ENCODE measurements at regions of chrX and their contacts with region 1.

Region 1: DNA sequence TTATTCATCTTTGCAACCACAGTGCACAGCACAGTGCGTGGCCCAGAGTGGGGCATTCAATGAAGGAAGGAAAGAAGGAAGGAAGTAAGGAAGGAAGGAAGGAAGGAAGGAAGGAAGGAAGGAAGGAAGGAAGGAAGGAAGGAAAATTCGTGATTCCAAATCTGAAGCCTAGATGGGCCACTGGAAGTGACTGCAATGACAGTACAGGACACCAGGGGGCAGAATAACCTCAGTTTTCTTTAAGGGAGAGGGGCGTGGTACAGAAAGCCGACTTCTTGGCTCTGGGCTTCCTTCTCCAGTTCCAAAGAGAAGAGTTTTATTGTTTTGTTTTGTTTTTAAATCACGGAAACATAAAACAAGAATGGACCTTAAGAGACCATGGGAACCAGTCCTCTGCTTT is 47.8 kb downstream of the APLN start:
- DNase-seq: peak; percentile 26
- H3K4me3 Mint-ChIP-seq: no peak overlapping the region
- H3K27ac Mint-ChIP-seq: no peak overlapping the region
- H3K4me1 Mint-ChIP-seq: peaks cover 20% of the 10 kb centered on the region
- H3K27me3 Mint-ChIP-seq: peaks cover 3% of the 10 kb centered on the region

Region 2: DNA sequence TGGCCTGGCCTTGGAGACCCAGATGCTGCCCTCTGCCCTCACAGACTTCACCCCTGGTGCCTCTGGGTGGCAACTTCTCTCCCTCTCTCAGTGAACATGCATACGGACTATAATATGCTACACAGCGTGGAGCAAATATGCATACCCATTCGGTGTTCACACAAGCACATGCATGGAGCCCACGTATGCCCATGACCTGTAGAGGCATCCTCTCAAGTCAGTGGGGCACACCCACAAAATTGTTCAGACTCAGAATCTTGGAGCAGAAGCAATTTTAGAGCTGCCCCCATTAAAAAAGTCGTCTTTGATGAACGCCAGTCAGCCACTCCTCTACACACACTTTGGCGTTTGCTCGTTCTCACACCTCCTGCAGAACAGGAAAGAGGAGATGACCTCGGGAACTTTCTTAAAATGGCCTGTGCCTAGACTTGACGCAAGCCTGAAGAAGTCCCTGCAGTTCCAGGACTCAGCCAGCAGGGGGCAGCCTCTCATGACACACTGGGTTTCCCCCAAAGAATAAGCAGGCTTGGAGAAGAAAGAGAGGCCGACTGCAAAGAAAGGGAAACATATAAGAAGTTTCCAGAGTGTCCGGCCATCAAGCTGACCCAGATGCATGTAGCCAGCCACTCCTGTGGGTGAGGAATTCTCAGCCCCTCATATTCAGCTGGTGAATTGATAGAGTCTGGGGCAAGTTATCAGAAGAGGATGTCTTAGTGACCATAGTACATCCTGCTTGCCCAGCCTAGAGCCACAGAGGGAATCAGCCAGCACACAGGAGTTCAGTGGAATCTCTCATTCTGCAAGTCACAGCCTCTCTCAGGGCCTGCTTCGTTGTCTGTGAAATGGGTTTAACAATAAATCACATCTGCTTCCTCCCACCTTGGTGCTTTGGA is 30.5 kb after region 1 on chrX:
- intact Hi-C with region 1: loop called (anchors 1 kb)
- DNase-seq: peak; percentile 48
- H3K4me3 Mint-ChIP-seq: no peak overlapping the region
- H3K27ac Mint-ChIP-seq: no peak overlapping the region
- H3K4me1 Mint-ChIP-seq: no peaks in the 10 kb centered on the region
- H3K27me3 Mint-ChIP-seq: no peaks in the 10 kb centered on the region

Region 3: GRCh38 chrX:129781134-129781672 is 174.3 kb after region 1 on chrX:
- intact Hi-C with region 1: loop called (anchors 10 kb)
- DNase-seq: peak; percentile 65
- H3K4me3 Mint-ChIP-seq: peak overlapping the region; percentile 87
- H3K27ac Mint-ChIP-seq: peak overlapping the region; percentile 91
- H3K4me1 Mint-ChIP-seq: peaks cover 63% of the 10 kb centered on the region
- H3K27me3 Mint-ChIP-seq: no peaks in the 10 kb centered on the region

Region 4: DNA sequence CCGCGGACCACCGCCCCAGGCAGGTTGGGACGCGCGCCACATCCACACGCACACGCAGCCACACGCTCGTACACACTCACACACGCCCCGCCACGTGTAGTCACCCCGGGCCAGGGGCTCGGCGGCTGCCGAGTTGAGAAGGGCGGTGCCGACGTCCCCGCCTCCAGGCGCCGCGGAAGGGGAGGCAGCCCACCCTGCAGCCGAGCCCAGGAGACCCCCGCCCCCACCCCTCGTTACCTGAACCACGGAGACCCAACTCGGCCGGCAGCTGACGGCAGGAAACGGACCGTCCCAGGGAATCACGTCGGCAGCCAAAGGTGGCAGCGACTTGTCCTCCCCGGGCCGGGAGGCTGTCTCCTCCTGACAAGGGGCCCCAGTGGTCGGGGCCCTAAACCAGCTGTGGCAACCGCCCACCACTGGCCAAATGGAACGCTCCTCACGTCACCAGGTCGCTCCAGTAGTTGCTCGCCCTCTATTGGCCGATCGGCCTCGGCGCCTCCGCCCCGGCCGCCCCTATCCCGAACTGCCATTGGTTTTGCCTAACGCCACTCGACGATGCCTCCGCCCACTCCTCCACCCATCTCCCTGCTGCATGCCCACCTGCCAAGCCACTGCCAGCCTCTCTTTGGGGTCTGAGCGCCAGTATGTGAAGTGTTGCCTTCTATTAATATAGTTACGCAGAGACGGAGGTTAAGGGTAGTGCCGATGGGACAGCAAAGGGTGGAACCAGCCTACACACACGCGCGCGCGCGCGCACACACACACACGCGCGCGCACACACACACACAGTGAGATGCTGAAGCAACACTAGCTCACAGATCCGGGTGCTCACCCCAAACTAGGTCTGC is 236.8 kb after region 1 on chrX and contains the start of gene ZDHHC9:
- intact Hi-C with region 1: loop called (anchors 5 kb)
- DNase-seq: peak; percentile 78
- H3K4me3 Mint-ChIP-seq: peak within 1 kb of the TSS; percentile 93
- H3K27ac Mint-ChIP-seq: peak within 1 kb of the TSS; percentile 88
- H3K4me1 Mint-ChIP-seq: peaks cover 28% of the 10 kb centered on the region
- H3K27me3 Mint-ChIP-seq: peaks cover 4% of the 10 kb centered on the region
- total RNA-seq, gene ZDHHC9: 13.6 and 14.2 TPM in 2 replicates

Region 5: DNA sequence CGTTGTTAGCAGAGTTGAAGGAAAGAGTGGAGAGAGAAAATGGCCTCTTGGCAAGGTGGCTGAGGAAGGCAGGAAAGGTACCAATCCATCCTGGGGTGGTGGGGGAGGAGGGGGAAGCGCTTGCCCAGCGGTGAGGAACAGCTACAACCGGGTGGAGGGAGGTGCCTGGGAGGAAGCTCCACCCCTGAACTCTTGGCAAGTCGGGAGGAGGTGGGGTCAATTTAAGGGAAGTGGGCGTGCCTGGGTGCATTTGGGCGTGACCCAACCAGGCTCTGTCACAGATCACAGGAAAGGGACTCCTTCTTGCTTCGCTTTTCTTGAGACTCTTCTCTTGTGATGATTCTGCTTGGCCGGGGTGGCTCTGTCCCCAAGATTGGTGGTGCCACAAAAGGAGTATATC is 417.2 kb after region 1 on chrX:
- intact Hi-C with region 1: loop called (anchors 1 kb)
- DNase-seq: peak; percentile 78
- H3K4me3 Mint-ChIP-seq: peak overlapping the region; percentile 60
- H3K27ac Mint-ChIP-seq: peak overlapping the region; percentile 44
- H3K4me1 Mint-ChIP-seq: peaks cover 14% of the 10 kb centered on the region
- H3K27me3 Mint-ChIP-seq: no peaks in the 10 kb centered on the region

Region 6: GRCh38 chrX:130196466-130196865 is 589.5 kb after region 1 on chrX:
- intact Hi-C with region 1: loop called (anchors 10 kb)
- DNase-seq: no peak
- H3K4me3 Mint-ChIP-seq: no peak overlapping the region
- H3K27ac Mint-ChIP-seq: no peak overlapping the region
- H3K4me1 Mint-ChIP-seq: peaks cover 4% of the 10 kb centered on the region
- H3K27me3 Mint-ChIP-seq: peaks cover 2% of the 10 kb centered on the region

Region 7: DNA sequence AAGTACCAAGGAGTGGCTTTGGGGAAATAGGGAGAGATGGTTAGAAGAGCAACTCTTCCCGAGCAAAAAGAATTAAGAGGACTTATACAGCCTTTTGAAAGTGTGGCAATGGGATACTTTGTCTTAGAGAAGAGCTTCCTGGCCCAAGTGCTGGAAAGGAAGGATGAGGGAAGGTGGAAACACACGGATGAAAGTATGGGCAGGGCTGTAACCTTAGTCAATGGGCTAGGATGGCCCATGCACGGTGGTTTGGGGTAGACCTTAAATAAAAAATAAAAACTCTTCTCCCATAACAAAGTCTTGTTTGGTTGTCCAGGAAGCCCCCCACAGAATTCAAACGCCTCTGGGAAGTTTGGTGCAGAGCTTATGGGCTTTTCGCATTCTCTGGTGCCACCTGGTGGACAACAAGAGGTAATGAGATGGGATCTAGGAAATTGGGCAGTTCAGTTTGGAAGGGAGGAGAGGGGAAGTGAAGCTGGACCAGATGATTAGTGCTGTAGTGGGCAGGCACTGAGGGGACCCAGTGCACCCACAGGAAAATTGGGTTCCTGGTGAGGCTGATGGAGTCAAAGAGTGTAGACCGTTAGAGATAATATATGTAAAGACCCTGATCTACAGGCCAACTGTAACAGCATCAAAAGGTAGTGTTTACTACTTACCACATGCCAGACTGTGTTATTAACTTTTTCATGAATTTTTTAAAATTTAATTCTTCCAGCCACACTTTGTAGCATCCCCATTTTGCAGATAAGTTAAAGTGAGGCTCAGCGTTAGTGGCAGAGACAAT is 1309.9 kb after region 1 on chrX:
- intact Hi-C with region 1: loop called (anchors 10 kb)
- DNase-seq: no peak
- H3K4me3 Mint-ChIP-seq: no peak overlapping the region
- H3K27ac Mint-ChIP-seq: no peak overlapping the region
- H3K4me1 Mint-ChIP-seq: no peaks in the 10 kb centered on the region
- H3K27me3 Mint-ChIP-seq: no peaks in the 10 kb centered on the region

Measured in activated T-helper 1 cell treated with anti-CD3 and anti-CD28 coated beads, Interleukin-12 subunit alpha, Interleukin-12 subunit beta, Interleukin-2, Interleukin-4 antibody, amounts not matched to agents 30 ng/mL and 10 ng/mL and 1 ng/mL, durations not matched to agents 14 hours and 24 hours and 36 hours (primary cell).